ENCODE measurements at regions of chr3 and their contacts with region 1.

Region 1: GRCh38 chr3:111691293-111691909 is 96.3 kb upstream of the ZBED2 start:
- DNase-seq: no peak
- ATAC-seq: no peak
- H3K4me3 Mint-ChIP-seq: no peak overlapping the region
- H3K27ac Mint-ChIP-seq: no peak overlapping the region
- H3K4me1 Mint-ChIP-seq: peaks cover 46% of the 10 kb centered on the region
- H3K27me3 Mint-ChIP-seq: no peaks in the 10 kb centered on the region

Region 2: GRCh38 chr3:111577794-111578685 is 113.4 kb before region 1 on chr3:
- CTCF ChIA-PET with region 1: interaction called, 10 read pairs
- POLR2A ChIA-PET with region 1: no interaction called
- intact Hi-C with region 1: loop called in 1 of 2 experiments (anchors 1 kb)
- DNase-seq: no peak
- ATAC-seq: peak; percentile 84
- H3K4me3 Mint-ChIP-seq: no peak overlapping the region
- H3K27ac Mint-ChIP-seq: peak overlapping the region; percentile 72
- H3K4me1 Mint-ChIP-seq: peaks cover 75% of the 10 kb centered on the region
- H3K27me3 Mint-ChIP-seq: no peaks in the 10 kb centered on the region

Region 3: DNA sequence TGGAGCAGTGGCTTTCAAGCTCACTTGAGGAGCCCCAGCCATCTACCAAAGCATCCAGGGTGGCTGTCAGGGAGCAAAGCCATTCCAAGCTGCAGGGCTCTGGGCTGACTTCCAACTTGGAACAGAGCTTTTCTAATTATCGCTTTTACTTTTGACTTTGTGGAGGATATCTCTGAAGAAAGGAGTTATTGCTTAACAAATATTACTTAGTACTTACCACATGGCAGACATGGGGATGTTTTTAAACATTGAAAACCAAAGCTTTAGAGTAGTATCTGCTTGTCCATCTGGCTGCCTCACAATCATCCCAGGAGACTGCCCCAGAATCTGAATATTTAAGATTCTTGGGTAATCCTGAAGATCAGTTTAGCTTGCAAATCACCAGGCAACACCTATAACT is 316.2 kb after region 1 on chr3:
- CTCF ChIA-PET with region 1: no interaction called
- POLR2A ChIA-PET with region 1: no interaction called
- intact Hi-C with region 1: no loop called
- DNase-seq: no peak
- ATAC-seq: no peak
- H3K4me3 Mint-ChIP-seq: no peak overlapping the region
- H3K27ac Mint-ChIP-seq: no peak overlapping the region
- H3K4me1 Mint-ChIP-seq: peaks cover 30% of the 10 kb centered on the region
- H3K27me3 Mint-ChIP-seq: no peaks in the 10 kb centered on the region

Measured in activated CD4-positive, alpha-beta T cell treated with anti-CD3 and anti-CD28 coated beads for 36 hours (primary cell).